B cell (primary cell): ENCODE measurements at regions of chr5 and their contacts with region 1.

Region 1: DNA sequence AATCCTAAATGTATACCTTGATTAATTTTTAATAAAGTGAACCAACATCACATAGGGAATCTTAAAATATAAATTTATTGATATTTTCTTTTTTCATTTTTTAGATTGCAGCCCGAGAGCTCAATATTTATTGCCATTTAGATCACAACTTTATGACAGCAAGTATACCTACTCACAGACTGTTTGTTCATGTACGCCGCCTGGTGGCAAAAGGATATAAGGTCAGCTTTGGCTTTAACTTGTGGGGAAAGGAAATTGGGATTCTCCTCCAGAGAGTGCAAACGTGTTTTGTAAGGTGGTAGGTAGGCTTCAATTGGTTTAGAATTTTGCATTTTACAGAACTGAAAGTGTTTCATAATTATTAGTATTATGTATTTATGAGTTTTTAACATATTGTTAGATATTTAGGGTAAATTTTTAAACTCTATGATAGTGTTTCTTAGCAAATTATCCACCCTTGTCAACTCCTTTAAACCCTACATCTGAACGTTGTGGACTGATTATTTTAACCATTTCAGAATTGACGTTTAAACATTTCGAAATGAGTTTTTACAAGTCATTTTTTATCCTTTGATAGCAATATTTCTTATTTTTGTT is 17.5 kb upstream of the DHFR start:
- DNase-seq: peak; percentile 65
- ATAC-seq: peak; percentile 48
- H3K4me3 ChIP-seq: no peak overlapping the region
- H3K4me3 Mint-ChIP-seq: no peak overlapping the region
- H3K27ac ChIP-seq: no peak overlapping the region
- H3K27ac Mint-ChIP-seq: no peak overlapping the region
- H3K4me1 ChIP-seq: peaks cover 5 to 13% of the 10 kb centered on the region in 2 donors
- H3K4me1 Mint-ChIP-seq: peaks cover 14% of the 10 kb centered on the region
- H3K27me3 ChIP-seq: no peaks in the 10 kb centered on the region
- H3K27me3 Mint-ChIP-seq: no peaks in the 10 kb centered on the region
- CTCF ChIP-seq: peak; percentile 94

Region 2: GRCh38 chr5:80346055-80346454 is 326.2 kb before region 1 on chr5:
- CTCF ChIA-PET with region 1: interaction called, 11 read pairs
- POLR2A ChIA-PET with region 1: no interaction called
- intact Hi-C with region 1: no loop called
- DNase-seq: peak; percentile 48
- ATAC-seq: no peak
- H3K4me3 ChIP-seq: no peak overlapping the region
- H3K4me3 Mint-ChIP-seq: no peak overlapping the region
- H3K27ac ChIP-seq: no peak overlapping the region
- H3K27ac Mint-ChIP-seq: no peak overlapping the region
- H3K4me1 ChIP-seq: no peaks in the 10 kb centered on the region
- H3K4me1 Mint-ChIP-seq: no peaks in the 10 kb centered on the region
- H3K27me3 ChIP-seq: no peaks in the 10 kb centered on the region
- H3K27me3 Mint-ChIP-seq: peaks cover 13% of the 10 kb centered on the region
- CTCF ChIP-seq: peak; percentile 56

Region 3: GRCh38 chr5:80481019-80481893 is 191.0 kb before region 1 on chr5:
- CTCF ChIA-PET with region 1: interaction called, 7 read pairs
- POLR2A ChIA-PET with region 1: no interaction called
- intact Hi-C with region 1: loop called (anchors 5 kb)
- DNase-seq: peak; percentile 12
- ATAC-seq: peak; percentile 43
- H3K4me3 ChIP-seq: no peak overlapping the region
- H3K4me3 Mint-ChIP-seq: no peak overlapping the region
- H3K27ac ChIP-seq: no peak overlapping the region
- H3K27ac Mint-ChIP-seq: no peak overlapping the region
- H3K4me1 ChIP-seq: no peaks in the 10 kb centered on the region
- H3K4me1 Mint-ChIP-seq: no peaks in the 10 kb centered on the region
- H3K27me3 ChIP-seq: peaks cover 0 to 5% (median 0%) of the 10 kb centered on the region in 4 experiments
- H3K27me3 Mint-ChIP-seq: peaks cover 12% of the 10 kb centered on the region
- CTCF ChIP-seq: peak; percentile 26

Region 4: DNA sequence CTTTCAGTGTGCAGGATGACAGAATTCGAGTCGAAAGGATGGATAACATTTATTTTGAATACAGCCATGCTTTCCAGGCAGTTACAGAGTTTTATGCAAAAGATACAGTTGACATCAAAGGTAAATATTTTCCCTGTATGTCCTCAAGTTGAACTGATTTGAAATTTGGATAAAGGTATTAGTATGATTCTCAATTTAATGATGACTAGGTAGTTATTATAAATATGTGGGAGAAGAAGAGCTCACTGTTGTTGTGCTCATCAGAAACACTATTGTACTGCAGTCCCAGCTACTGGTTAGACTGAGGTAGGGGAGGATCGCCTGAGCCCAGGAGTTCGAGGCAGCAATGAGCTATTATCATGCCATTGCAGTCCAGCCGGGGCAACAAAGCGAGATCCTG is 53.2 kb after region 1 on chr5:
- CTCF ChIA-PET with region 1: no interaction called
- POLR2A ChIA-PET with region 1: no interaction called
- intact Hi-C with region 1: no loop called
- DNase-seq: no peak
- ATAC-seq: no peak
- H3K4me3 ChIP-seq: no peak overlapping the region
- H3K4me3 Mint-ChIP-seq: no peak overlapping the region
- H3K27ac ChIP-seq: no peak overlapping the region
- H3K27ac Mint-ChIP-seq: no peak overlapping the region
- H3K4me1 ChIP-seq: no peaks in the 10 kb centered on the region
- H3K4me1 Mint-ChIP-seq: peaks cover 4% of the 10 kb centered on the region
- H3K27me3 ChIP-seq: no peaks in the 10 kb centered on the region
- H3K27me3 Mint-ChIP-seq: no peaks in the 10 kb centered on the region
- CTCF ChIP-seq: no peak

Region 5: GRCh38 chr5:80745490-80745889 is 73.3 kb after region 1 on chr5:
- CTCF ChIA-PET with region 1: no interaction called
- POLR2A ChIA-PET with region 1: no interaction called
- intact Hi-C with region 1: no loop called
- DNase-seq: no peak
- ATAC-seq: no peak
- H3K4me3 ChIP-seq: no peak overlapping the region
- H3K4me3 Mint-ChIP-seq: no peak overlapping the region
- H3K27ac ChIP-seq: no peak overlapping the region
- H3K27ac Mint-ChIP-seq: no peak overlapping the region
- H3K4me1 ChIP-seq: peaks cover 11 to 12% of the 10 kb centered on the region in 2 donors
- H3K4me1 Mint-ChIP-seq: peaks cover 16% of the 10 kb centered on the region
- H3K27me3 ChIP-seq: no peaks in the 10 kb centered on the region
- H3K27me3 Mint-ChIP-seq: no peaks in the 10 kb centered on the region
- CTCF ChIP-seq: no peak